GM10248 (cell line): ENCODE measurements at regions of chr15 and their contacts with region 1.

Region 1: DNA sequence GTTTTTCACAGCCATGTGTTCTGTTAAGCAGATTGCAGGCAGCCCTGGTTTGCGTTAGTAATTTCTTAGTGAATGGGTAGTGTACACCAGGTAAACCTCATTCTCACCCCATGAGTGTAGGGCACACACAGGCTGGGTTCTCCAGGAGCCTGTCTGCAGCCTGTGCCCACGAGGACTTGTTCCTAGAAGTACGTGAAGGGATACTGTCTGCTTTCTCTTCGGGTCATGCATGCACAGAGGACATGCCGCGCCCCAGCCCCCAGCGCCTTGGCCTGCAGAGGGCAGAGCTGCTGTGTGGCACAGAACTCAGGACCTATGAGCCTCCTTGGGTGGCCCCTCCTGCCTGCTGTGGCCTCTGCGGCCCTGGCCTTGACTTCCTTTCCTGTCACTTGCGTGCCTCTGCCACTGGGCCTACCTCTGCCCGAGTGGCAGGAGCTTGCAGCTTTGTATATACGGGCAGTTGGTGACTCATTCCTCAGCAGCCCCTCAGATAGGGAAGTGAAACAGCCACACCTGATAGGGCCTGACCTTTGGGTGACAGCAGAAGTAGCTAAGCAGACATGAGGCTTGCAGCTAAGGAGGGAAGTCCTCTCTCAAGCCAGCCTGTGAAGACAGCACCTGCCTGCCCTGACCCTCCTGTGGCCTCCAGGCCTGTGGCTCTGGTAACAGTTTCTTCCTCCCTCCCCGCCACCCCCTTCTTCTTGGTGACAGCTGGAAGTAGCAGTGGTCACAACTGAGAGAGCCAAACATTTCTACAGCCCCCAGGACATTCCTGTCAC is 19.5 kb downstream of the PPCDC start:
- DNase-seq: peak; percentile 89
- CTCF ChIP-seq: peak; percentile 88

Region 2: DNA sequence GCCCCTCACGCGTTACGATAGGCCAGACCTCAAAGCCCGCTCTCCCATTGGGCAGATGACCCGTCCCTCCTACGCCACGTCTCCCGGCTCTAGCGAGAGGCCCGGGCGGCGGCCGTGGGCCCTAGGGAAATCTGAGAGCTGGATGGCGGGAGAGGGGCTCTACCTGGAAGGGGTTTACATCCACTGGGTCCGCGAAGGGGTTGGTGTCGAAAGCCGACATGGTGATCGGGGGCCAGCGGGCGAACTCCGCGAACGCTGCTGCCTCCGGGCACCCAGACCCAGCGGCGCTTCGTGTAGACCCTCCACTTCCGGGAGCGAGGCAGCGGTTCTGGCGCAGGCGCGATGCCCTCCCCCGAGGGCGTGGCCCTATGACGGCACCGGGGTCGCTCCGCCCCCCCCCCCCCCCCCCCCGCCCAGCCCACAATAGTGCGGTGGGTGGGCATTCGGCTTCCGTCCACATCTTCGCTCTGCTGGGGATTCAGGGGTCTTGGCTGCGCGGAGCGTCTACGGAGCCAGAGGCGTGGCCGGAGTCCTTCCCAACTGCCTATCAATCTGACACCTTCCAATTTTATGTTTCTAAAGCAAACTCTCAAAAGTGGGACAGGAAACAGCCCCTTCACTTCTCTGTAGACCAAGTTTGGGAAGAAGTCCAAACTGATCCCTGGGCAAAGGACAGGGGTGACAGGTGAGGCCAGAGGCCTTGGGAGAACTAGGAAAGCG is 169.7 kb before region 1 on chr15 and contains the start of gene SCAMP2:
- CTCF ChIA-PET with region 1: no interaction called
- POLR2A ChIA-PET with region 1: no interaction called
- DNase-seq: peak; percentile 96
- CTCF ChIP-seq: no peak

Region 3: GRCh38 chr15:75061272-75061671 is 18.4 kb after region 1 on chr15:
- CTCF ChIA-PET with region 1: interaction called, 13 read pairs
- POLR2A ChIA-PET with region 1: interaction called, 7 read pairs
- DNase-seq: peak; percentile 59
- CTCF ChIP-seq: no peak

Region 4: DNA sequence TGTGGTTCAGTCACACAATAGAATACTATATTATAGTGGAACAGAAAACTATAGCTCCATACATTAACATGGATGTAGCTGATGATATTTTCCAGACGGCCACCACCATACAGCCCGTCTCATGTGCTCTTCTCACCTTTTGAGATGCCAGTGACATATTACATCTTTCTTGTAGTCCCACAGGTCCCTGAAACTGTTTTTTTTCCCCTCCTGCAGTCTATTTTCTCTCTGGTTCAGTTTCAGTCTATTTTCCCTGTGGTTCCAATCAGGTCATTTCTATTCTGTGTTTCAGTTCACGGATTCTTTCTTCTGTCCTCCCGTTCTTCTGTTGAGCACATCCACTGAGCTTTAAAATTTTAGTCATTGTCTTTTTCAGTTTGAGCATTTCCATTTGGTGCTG is 52.7 kb after region 1 on chr15:
- CTCF ChIA-PET with region 1: interaction called, 22 read pairs
- POLR2A ChIA-PET with region 1: interaction called, 4 read pairs
- DNase-seq: peak; percentile 50
- CTCF ChIP-seq: no peak

Region 5: GRCh38 chr15:75117993-75118392 is 75.1 kb after region 1 on chr15:
- CTCF ChIA-PET with region 1: interaction called, 10 read pairs
- POLR2A ChIA-PET with region 1: no interaction called
- DNase-seq: no peak
- CTCF ChIP-seq: no peak

Region 6: DNA sequence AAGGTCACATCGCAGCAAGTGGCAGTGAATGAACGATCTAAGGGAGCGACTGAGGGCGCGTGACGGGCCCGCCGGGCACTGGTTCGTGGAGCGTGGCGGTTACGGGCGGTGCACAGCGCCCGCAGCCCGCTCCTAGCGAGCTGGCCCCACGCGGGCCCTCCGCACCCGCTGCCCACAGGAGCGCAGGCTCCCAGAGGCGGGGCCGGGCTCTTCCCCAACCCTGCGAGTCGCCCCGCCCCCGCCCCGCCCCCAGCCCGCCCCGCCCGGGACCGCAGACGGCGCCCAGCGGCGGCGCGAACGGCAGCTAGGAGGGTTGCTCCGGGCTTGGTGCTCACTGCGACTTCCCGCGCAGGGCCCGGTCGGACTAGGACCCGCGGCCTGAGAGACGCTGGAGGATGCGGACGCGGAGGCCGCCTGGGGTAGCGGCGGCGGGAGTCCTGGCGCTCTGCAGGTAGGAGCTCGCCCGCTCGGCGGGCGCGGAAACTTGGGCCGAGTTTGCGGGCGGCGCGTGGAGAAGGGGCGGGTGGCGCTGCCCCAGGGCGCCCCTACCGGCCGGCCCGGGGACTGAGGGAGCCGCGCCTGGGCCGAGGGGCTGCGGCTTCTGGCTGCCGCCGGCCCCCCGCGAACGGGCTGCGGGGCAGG is 158.8 kb after region 1 on chr15 and contains the start of gene C15orf39:
- CTCF ChIA-PET with region 1: interaction called, 54 read pairs
- POLR2A ChIA-PET with region 1: interaction called, 25 read pairs
- DNase-seq: peak; percentile 92
- CTCF ChIP-seq: peak; percentile 88